ENCODE measurements at regions of chr17 and their contacts with region 1.

Region 1: DNA sequence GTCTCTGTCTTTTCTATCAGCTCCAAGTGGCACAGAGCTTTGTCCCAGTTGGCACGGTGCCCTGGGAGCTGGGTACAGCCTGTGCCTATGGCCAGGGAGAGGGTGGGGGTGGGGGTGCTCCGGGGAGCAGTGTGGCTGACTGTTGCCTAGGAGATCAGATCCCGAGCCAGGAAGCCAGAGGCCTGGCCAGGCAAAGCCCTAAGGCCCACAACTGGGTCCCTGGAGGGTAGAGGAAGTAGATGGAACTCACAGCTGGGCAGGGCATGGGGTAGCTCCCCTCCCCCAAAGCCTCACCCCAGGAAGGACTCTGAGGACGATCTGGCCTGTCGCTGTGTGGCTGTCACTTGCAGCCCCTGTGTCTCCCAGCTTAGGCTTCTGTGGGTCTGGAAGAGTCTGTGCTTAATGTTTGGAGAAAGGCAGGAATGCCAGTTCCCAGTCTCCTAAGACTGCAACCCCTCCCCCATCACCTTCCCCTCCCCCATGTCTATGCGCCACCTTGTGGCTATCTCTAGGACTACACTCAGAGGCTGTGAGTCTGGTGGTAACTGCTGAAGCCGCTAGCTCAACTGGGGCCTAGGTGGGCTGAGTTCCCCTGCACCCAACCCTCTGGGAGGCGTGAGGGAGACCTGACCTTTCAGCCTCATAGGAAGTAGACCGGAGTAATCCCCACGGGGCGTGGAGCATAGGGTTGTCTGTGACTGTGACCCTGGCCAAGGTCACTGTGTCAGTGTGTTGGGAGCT is 12.6 kb downstream of the THRA start:
- DNase-seq: no peak
- H3K4me3 ChIP-seq: no peak overlapping the region
- CTCF ChIP-seq: peak; percentile 89

Region 2: GRCh38 chr17:39996800-39997199 is 78.6 kb before region 1 on chr17:
- CTCF ChIA-PET with region 1: no interaction called
- POLR2A ChIA-PET with region 1: no interaction called
- DNase-seq: no peak
- H3K4me3 ChIP-seq: no peak overlapping the region
- CTCF ChIP-seq: no peak

Region 3: DNA sequence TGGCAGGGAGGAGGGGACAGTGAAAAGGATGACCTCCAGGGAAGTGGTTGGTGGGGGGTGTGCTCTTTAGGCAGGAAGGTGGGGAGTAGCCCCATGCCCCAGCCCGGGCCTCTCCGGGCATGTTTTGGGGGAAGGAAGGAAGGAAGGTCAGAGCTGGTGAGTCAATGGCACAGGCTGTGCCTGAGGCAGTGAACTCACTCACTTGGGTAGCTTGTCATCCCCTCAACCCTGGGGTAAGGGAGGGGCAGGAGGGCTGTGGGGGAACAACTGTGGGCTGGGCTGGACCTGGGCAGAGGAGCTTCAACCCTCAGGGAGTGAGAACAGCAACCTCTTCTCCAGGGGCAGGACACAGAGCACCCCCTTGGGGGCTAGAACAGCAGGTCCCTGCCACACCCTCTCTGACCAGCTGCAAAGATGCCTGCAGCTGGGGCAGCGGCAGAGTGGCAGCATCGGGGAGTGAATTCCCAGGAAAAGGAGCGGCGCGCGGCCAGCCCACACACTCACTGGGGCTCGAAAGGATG is 53.9 kb before region 1 on chr17:
- CTCF ChIA-PET with region 1: interaction called, 29 read pairs
- POLR2A ChIA-PET with region 1: no interaction called
- DNase-seq: no peak
- H3K4me3 ChIP-seq: no peak overlapping the region
- CTCF ChIP-seq: no peak

Region 4: DNA sequence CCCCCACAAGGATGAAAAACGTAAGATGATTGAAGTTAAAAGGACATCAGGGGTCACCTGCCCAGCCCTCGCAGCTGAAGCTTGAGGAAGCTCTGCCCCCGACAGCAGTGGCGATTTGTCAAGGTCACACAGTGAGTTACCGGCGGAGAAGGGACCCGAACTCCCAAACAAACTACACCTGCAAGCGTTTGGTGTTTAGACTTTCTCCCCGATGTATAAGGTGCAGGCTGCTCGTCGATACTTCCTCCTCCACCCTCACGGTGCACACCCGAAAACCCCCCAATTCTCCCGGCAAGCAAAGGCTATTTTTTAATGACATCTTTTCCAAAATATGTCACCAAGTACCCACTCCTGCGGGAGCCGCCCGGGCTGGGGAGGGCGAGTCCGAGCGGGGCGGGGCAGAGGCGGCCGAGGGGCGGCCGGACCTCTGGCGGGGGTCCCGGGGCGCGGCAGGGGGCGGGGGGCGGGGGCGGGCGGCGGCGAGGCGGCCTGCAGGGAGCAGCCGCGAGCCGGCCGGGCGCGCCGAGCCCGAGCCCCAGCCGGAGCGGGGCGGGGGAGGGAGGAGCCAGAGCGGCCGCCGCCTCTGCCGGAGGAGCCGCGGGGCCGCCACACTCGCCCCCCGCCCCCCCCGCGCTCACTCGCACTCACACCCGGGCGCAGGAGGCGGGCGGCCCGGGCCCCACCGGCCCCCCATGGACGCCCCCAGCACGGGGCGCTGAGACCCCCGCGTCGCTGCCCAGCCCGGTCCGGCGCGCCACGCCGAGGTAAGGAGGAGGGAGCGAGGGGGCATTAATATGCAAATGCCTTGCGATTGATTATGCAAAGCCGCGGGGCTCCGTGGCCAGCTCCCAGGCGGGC is 12.8 kb before region 1 on chr17 and contains the start of gene THRA:
- CTCF ChIA-PET with region 1: interaction called, 153 read pairs
- POLR2A ChIA-PET with region 1: interaction called, 6 read pairs
- DNase-seq: no peak
- H3K4me3 ChIP-seq: peak within 1 kb of the TSS; percentile 90
- CTCF ChIP-seq: no peak

Region 5: DNA sequence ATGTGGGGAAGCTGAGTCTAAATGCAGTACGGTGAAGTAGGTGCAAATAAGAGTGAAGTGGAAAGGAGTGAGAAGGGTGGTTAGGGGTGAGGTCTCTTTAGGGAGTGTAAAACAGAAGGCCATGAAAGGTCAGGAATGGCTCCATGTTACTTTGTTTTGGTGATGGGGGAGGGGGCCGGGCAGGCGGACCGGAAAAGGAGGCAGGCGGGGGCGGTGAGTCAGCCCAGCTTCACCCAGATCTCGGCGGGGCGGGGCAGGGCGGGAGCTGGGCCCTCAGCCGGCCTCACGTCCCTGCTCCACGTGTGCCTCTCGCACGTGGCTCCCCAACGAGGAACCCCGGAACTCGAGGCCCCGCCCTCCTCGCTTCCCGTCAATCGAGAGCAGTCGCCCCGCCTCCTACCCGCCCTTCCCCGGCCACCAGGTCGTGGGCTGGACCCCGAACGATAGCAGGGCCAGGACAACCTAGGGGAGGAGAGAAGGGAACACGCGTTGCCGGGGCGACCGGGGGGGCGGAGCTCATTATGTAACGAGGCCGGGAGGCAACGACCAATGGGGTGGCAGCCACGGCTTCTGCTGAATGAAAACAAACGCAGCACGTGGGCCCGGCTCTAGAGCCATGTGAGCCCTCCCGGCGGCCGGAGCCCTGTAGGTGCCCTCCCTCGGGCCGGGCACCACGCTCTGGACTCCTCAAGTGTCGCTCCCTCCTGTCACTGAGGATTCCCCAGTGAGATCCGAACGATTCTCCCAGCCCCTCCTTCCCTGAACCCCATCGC is 23.7 kb after region 1 on chr17:
- CTCF ChIA-PET with region 1: interaction called, 273 read pairs
- POLR2A ChIA-PET with region 1: interaction called, 4 read pairs
- DNase-seq: peak; percentile 94
- H3K4me3 ChIP-seq: peak overlapping the region; percentile 87
- CTCF ChIP-seq: no peak

Region 6: GRCh38 chr17:40168262-40168832 is 93.0 kb after region 1 on chr17:
- CTCF ChIA-PET with region 1: interaction called, 20 read pairs
- POLR2A ChIA-PET with region 1: no interaction called
- DNase-seq: peak; percentile 26
- H3K4me3 ChIP-seq: no peak overlapping the region
- CTCF ChIP-seq: peak; percentile 55

Region 7: GRCh38 chr17:40287494-40288369 is 212.4 kb after region 1 on chr17 and contains the start of gene CDC6:
- CTCF ChIA-PET with region 1: no interaction called
- POLR2A ChIA-PET with region 1: no interaction called
- DNase-seq: peak; percentile 91
- H3K4me3 ChIP-seq: peak within 1 kb of the TSS; percentile 75
- CTCF ChIP-seq: no peak